PC-9 (cell line): ENCODE measurements at regions of chr12 and their contacts with region 1.

Region 1: GRCh38 chr12:116502952-116503542 is 56.1 kb upstream of the MAP1LC3B2 start:
- DNase-seq: peak; percentile 76 to 100
- H3K4me3 ChIP-seq: no peak overlapping the region; the same call in 1 of the 2 replicates
- H3K27ac ChIP-seq: peak overlapping the region; percentile 90
- H3K4me1 ChIP-seq: peaks cover 17% of the 10 kb centered on the region
- H3K27me3 ChIP-seq: no peaks in the 10 kb centered on the region
- CTCF ChIP-seq: no peak

Region 2: DNA sequence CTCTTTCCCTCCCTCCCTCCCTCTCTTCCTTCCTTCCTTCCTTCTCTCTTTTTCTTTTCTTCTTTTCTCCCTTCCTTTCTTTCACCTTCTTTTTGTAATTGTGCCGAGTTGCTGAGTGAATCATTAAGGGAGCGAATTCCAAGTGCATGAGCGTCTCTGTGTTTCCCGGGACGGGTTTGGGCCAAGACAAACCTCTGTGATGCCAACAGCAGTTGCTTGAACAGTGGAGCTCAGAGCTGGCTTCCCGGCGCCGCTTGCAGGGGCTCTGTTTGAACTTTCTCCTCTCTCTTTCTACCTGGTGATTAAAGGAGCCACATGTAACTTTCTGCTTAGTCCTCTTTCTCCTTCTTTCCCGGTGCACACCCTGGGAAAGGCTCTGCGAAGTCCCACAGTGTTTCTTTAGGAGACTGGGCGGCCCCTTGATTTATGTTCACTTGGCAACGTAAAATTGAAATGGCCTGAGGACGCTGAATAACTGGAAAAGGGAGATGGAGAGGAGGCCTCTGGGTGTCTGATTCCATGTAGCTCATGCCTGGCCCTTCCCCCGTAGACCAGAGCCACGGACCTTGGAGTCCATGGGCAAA is 22.5 kb after region 1 on chr12:
- CTCF ChIA-PET with region 1: no interaction called
- POLR2A ChIA-PET with region 1: no interaction called
- intact Hi-C with region 1: loop called (anchors 1 kb)
- DNase-seq: peak; percentile 55 to 64
- H3K4me3 ChIP-seq: no peak overlapping the region
- H3K27ac ChIP-seq: no peak overlapping the region
- H3K4me1 ChIP-seq: peaks cover 40% of the 10 kb centered on the region
- H3K27me3 ChIP-seq: no peaks in the 10 kb centered on the region
- CTCF ChIP-seq: no peak

Region 3: DNA sequence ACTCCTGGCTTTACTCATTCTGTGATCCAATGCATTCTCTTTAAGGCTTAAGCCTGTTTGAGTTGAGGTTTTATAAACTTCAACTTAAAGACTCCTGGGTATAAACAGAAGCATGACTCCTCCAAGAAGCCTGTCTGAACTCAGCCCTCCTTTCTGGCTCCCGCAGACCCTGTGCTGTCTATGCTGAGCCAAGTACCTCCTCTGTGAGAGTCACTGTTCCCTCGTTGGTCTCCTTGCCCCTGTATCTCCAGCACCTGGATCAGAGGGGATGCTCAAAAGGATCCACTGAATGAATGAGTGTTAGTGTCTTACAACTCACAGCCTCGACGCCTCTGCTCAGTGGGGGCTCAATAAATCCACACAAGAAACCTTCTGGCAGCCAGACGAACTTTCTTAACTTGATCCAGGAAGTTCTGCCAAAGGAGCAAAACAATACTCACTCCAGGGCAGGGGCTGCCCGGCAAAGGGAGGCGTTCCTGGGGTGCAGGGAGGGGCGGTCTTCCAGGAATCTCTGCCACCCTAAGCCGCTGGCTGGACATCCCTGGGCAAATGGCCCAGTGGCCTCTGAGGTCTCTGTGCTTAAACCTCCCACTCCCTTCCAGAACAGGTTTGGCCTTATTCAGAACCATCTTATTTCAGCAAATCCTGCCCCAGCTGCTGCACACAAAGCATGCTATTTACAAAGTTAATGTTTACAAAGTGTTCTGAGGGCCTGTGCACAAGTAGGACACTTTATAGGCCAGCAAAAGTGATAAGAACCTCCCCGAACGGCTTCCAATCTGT is 89.0 kb after region 1 on chr12:
- CTCF ChIA-PET with region 1: no interaction called
- POLR2A ChIA-PET with region 1: no interaction called
- intact Hi-C with region 1: loop called (anchors 2 kb)
- DNase-seq: peak in 1 of 2 experiments; percentile 70
- H3K4me3 ChIP-seq: no peak overlapping the region
- H3K27ac ChIP-seq: no peak overlapping the region
- H3K4me1 ChIP-seq: peaks cover 12% of the 10 kb centered on the region; the same call in 1 of the 2 replicates
- H3K27me3 ChIP-seq: 0 out of 2 replicates have a peak, but pooled peaks cover 3% of the 10 kb centered on the region
- CTCF ChIP-seq: no peak

Region 4: GRCh38 chr12:116659771-116660481 is 156.9 kb after region 1 on chr12:
- CTCF ChIA-PET with region 1: no interaction called
- POLR2A ChIA-PET with region 1: no interaction called
- intact Hi-C with region 1: loop called (anchors 5 kb)
- DNase-seq: peak; percentile 47 to 86
- H3K4me3 ChIP-seq: peak overlapping the region; percentile 24; the same call in 1 of the 2 replicates
- H3K27ac ChIP-seq: no peak overlapping the region
- H3K4me1 ChIP-seq: peaks cover 22% of the 10 kb centered on the region
- H3K27me3 ChIP-seq: peaks cover 7% of the 10 kb centered on the region; the same call in 1 of the 2 replicates
- CTCF ChIP-seq: no peak